Activated T-helper 1 cell treated with anti-CD3 and anti-CD28 coated beads, Interleukin-12 subunit alpha, Interleukin-12 subunit beta, Interleukin-2, Interleukin-4 antibody, amounts not matched to agents 30 ng/mL and 10 ng/mL and 1 ng/mL, durations not matched to agents 14 hours and 24 hours and 36 hours (primary cell): ENCODE measurements at regions of chr6 and their contacts with region 1.

Region 1: DNA sequence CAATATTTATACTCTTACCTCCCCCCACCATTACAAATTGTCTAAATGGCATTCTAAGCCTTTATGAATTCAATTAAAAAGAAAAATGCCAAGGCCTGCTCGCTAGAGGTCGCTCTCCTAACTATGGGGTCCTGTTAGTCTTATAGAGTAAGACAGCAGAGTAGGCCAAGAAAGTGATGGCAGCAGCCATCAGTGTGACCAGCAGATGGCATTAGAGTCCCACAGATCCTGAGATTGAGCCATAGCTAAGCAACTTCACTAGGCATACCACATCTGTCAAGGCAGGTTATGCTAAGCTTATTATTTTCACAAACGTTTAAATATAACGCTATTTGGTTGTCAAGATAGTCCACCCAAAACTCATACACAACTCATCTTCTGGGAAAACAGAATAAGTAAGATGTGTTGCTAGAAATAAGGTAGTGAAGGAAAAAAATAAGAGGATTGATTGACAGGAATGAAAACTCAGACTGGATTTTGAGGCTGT is 57.6 kb upstream of the SCAF8 start:
- DNase-seq: peak; percentile 77
- H3K4me3 Mint-ChIP-seq: no peak overlapping the region
- H3K27ac Mint-ChIP-seq: no peak overlapping the region
- H3K4me1 Mint-ChIP-seq: no peaks in the 10 kb centered on the region
- H3K27me3 Mint-ChIP-seq: peaks cover 4% of the 10 kb centered on the region

Region 2: GRCh38 chr6:154070657-154071056 is 605.0 kb before region 1 on chr6:
- intact Hi-C with region 1: no loop called
- DNase-seq: no peak
- H3K4me3 Mint-ChIP-seq: no peak overlapping the region
- H3K27ac Mint-ChIP-seq: no peak overlapping the region
- H3K4me1 Mint-ChIP-seq: no peaks in the 10 kb centered on the region
- H3K27me3 Mint-ChIP-seq: no peaks in the 10 kb centered on the region

Region 3: DNA sequence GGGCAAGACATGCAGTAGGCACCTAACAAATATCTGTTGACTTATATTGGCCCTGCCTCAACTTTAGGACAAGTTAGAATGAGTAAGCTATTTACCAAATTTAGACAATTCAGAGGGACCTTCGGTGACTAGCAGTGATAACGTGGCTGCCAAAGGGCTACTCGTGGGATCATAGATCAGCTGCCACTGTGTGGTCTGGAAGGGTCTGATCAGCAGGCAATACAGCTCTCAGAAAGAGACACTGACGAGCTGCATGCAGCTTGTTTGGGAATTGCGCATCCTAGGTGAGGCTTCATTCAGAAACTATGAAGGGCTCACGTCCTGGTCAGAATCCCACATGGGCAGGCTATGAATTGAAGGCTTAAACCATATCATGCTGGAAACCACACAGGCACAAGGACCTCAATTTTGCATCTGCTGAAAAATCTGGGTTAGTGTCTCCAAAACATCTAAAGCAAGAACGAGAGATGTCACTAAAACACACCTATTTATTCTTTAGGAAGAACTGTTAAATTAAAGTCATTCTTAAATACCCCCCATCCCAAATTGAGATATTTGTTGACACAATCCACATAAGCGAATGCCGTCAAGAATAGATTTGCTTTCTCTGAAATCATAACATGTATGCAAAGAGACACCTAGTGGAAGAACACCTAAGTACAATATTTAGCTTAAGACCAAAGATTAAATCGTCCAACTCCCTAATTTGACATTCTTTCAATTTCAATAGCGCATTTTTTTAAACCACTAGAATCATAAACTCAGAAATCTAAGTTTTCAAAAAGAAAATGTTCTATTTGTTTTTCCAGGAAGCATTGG is 398.6 kb before region 1 on chr6:
- intact Hi-C with region 1: loop called (anchors 1 kb)
- DNase-seq: no peak
- H3K4me3 Mint-ChIP-seq: peak overlapping the region; percentile 65
- H3K27ac Mint-ChIP-seq: peak overlapping the region; percentile 74
- H3K4me1 Mint-ChIP-seq: peaks cover 23% of the 10 kb centered on the region
- H3K27me3 Mint-ChIP-seq: peaks cover 18% of the 10 kb centered on the region

Region 4: DNA sequence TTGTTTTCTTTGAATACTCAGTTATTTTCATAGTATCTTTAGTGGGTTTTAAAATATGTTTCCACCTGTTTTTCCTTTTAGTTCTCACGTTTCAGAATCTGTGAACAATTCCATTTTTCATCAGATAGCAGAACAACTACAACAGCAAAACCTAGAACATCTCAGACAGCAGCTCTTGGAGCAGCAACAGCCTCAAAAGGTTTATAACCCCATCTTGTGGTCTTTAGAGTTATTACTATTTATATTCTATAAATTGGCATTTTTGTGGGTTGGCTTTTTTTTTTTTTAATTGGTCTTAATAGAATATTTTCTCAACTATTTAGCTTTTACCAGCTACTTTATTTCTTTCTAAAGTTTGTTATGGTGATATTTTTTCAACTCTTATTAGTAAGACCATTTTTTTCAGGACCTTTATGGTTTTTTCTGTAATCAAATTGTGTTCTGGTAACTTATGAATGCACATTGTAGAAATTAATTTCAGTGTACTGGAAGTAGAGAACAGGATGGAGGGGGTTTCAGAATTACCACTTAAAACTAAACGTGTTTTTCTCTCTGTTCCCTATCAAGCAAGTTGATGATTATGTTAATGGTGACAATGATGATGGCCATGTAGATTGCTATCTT is 129.8 kb after region 1 on chr6:
- intact Hi-C with region 1: loop called (anchors 1 kb)
- DNase-seq: no peak
- H3K4me3 Mint-ChIP-seq: no peak overlapping the region
- H3K27ac Mint-ChIP-seq: no peak overlapping the region
- H3K4me1 Mint-ChIP-seq: peaks cover 4% of the 10 kb centered on the region
- H3K27me3 Mint-ChIP-seq: no peaks in the 10 kb centered on the region

Region 5: DNA sequence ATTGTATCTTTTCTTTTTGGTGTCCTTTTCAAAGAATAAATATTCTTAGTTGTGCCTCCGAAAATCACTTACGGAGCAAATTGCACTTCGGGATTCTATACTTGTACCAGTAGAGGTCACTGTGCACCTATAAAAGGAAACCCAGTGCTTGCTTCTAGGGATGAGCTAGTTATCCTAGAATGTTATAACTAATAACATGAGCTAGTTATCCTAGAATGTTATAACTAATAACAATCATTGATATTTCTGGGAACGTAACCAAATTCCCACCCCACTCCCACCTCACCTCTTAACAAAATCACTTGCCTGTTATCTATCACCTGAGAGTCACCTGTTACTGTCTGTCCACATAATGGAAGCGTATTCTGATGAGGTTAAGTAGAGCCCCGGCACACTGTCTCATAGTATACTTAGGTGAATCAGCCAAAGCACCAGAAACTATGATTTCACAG is 192.5 kb after region 1 on chr6:
- intact Hi-C with region 1: loop called (anchors 1 kb)
- DNase-seq: no peak
- H3K4me3 Mint-ChIP-seq: no peak overlapping the region
- H3K27ac Mint-ChIP-seq: no peak overlapping the region
- H3K4me1 Mint-ChIP-seq: peaks cover 6% of the 10 kb centered on the region
- H3K27me3 Mint-ChIP-seq: no peaks in the 10 kb centered on the region

Region 6: GRCh38 chr6:155100087-155100486 is 424.4 kb after region 1 on chr6:
- intact Hi-C with region 1: loop called (anchors 10 kb)
- DNase-seq: no peak
- H3K4me3 Mint-ChIP-seq: no peak overlapping the region
- H3K27ac Mint-ChIP-seq: no peak overlapping the region
- H3K4me1 Mint-ChIP-seq: peaks cover 32% of the 10 kb centered on the region
- H3K27me3 Mint-ChIP-seq: no peaks in the 10 kb centered on the region

Region 7: GRCh38 chr6:155248008-155249001 is 572.7 kb after region 1 on chr6:
- intact Hi-C with region 1: loop called (anchors 10 kb)
- DNase-seq: no peak
- H3K4me3 Mint-ChIP-seq: no peak overlapping the region
- H3K27ac Mint-ChIP-seq: no peak overlapping the region
- H3K4me1 Mint-ChIP-seq: peaks cover 6% of the 10 kb centered on the region
- H3K27me3 Mint-ChIP-seq: no peaks in the 10 kb centered on the region

Region 8: DNA sequence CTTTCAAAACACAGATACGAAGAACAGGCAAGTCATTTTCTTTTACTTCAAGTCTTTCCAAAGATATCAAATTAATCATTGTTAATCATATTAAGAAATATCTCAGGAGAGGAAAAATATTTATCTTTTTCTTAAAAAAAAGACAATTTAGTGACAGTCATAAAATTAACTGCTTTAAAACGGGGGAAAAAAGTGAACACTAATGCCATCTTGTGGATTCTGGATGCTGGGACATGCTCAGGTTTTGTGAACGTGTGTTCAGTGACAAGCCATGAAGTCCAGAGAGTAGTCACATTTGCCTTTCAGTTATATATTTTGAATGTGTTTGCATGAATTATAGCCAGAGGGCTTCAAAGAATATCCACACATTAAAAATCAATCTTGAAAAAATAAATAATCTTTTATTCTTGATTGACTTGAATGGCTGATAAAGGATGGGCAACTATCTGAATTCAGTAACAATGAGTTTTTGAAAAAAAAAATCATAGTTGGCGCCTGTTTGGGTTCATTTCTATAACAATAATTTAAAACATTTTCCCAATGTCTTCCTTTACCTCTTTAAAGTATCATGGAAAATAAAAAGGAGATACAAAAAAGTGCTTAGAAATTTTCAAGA is 854.7 kb after region 1 on chr6:
- intact Hi-C with region 1: loop called (anchors 5 kb)
- DNase-seq: no peak
- H3K4me3 Mint-ChIP-seq: no peak overlapping the region
- H3K27ac Mint-ChIP-seq: no peak overlapping the region
- H3K4me1 Mint-ChIP-seq: peaks cover 10% of the 10 kb centered on the region
- H3K27me3 Mint-ChIP-seq: peaks cover 4% of the 10 kb centered on the region